ENCODE measurements at regions of chr3 and their contacts with region 1.

Region 1: DNA sequence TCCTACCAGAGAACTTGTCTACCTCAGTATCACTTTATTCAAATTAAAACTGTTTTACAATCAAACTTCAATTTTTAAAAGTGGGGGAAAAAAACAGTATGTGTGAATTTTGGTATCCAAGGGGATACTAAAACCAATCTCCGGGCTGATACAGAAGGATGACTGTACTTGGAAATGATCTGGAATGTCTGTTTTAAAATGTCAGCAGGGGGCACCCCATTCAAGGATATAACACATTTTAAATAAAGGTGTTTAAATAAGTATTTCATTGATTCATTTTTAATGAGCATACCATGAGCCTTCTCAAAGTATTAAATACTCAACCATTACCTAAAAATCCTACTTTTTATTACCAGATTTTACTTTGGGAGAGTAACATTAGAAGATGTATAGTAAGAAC is 67.9 kb downstream of the ULK4 start:
- DNase-seq: no peak

Region 2: GRCh38 chr3:41477399-41478014 is 416.5 kb before region 1 on chr3:
- intact Hi-C with region 1: no loop called
- DNase-seq: no peak

Region 3: DNA sequence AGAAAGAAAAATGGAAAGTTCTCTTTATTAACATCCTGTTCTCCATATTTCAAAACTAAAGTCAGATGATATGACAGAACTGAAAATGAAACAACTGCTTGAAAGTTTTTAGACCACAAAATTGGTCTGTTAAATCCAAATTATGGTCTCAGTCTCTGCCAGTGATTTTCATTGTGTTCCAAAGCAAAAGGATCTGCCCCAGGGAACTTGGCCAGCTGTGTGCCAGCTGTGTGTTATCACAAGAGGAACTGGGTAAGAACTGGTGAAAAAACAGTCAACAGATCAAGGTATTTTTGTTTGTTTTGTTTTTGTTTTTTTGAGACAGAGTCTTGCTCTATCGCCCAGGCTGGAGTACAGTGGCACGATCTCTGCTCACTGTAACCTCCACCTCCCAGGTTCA is 371.4 kb before region 1 on chr3:
- intact Hi-C with region 1: no loop called
- DNase-seq: no peak

Region 4: DNA sequence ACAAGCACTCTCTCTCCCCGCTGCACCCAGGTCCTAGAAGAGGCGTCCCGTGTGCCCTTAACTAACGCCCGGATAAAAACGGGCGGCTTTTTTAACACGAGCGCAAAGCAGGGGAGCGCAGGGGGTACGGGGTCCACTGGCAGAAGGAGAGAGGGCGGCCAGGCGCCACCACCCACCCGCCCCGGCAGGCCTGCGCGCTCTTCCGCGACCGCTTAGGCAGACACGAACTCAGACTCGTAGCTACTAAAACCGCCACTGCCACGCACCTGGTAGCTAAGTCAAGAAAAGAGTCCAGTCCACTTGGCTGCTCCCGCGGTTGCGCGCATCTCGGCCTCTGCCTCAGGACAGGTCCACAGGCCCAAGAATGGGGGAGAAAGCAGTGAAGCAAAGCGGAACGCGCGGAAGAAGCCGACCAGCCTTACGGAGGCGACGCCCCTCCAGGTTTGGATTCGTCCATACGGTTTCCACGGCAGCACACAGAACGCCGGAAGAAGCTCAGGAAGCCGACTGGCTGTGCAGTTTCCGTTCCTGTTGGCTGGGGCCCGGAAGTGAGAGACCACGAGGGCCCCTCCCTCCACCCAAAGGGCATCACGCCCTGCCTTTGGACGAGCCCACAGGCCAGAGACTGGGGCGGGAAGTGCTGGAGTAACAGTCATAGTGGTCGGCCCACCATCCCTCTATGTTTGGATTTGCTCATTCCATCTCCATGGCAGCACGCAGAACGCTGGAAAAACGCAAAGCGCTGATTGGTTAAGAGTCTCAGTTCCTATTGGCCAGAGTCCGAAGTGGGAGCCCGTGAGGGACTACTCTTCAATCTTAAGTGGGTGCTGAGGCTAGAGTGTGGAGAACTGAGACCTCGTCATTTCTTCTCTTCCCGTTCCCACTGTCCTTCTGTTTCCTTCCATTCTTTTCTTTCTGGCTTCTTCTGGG is 68.0 kb after region 1 on chr3 and contains the start of gene ULK4:
- intact Hi-C with region 1: no loop called
- DNase-seq: peak; percentile 99
- total RNA-seq, gene ULK4: 5.1 TPM

Region 5: DNA sequence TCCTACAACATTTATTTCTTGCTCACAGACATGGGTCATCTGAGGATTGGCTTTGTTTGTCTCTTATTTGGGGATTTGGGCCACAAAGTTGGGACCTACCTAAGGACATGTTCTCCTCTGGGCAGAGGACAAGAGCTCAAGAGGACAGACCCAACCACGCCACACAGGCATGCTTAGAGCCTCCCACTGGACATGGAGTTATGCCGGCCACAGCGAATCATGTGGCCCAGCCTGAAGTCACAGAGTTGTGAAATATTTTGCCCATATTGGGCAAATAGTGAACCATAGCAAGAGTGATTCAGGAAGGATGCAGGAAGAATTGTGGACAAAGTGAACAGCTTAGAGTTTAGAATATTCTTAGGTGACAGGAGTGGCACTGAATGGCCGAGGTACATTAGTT is 207.1 kb after region 1 on chr3:
- intact Hi-C with region 1: loop called (anchors 1 kb)
- DNase-seq: no peak

Region 6: GRCh38 chr3:42118762-42119361 is 224.9 kb after region 1 on chr3:
- intact Hi-C with region 1: loop called (anchors 5 kb)
- DNase-seq: no peak

Region 7: GRCh38 chr3:42190701-42191462 is 296.9 kb after region 1 on chr3:
- intact Hi-C with region 1: loop called (anchors 2 kb)
- DNase-seq: peak; percentile 75

Region 8: GRCh38 chr3:42229942-42230688 is 336.1 kb after region 1 on chr3:
- intact Hi-C with region 1: loop called (anchors 10 kb)
- DNase-seq: no peak

Region 9: DNA sequence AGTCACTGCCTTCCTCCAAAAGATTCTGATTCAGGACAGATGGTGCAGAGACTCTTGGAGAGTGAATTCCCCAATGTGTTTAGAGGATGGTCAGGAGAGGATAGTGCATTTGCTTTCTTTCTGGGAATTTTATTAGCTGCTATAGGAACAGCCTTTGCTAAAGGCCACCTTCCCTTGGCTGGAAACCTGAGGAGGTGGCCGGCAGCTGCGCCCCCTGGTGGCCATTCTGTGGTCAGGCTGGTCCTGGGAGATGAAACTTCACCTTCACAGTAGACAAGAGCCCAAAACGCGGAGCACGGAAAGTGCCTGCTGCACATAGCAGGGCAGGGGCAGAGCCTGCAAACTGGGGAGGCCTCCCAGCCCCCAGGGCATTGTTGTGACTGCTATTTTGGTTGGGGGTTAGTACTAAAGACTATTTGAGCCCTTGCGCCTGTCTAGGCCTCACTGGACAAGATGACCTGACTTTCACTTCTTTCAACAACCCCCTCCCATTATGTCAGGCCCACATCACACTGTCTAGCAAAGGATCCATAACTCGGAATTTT is 653.5 kb after region 1 on chr3:
- intact Hi-C with region 1: loop called (anchors 10 kb)
- DNase-seq: peak; percentile 89